Activated CD4-positive, alpha-beta T cell treated with anti-CD3 and anti-CD28 coated beads for 36 hours (primary cell): ENCODE measurements at regions of chr15 and their contacts with region 1.

Region 1: GRCh38 chr15:94670438-94671034 is 439.2 kb downstream of the MCTP2 start:
- DNase-seq: no peak
- ATAC-seq: no peak
- H3K4me3 Mint-ChIP-seq: no peak overlapping the region
- H3K27ac Mint-ChIP-seq: no peak overlapping the region
- H3K4me1 Mint-ChIP-seq: no peaks in the 10 kb centered on the region
- H3K27me3 Mint-ChIP-seq: peaks cover 5% of the 10 kb centered on the region

Region 2: GRCh38 chr15:94877833-94878232 is 207.3 kb after region 1 on chr15:
- CTCF ChIA-PET with region 1: no interaction called
- POLR2A ChIA-PET with region 1: no interaction called
- intact Hi-C with region 1: no loop called
- DNase-seq: no peak
- ATAC-seq: no peak
- H3K4me3 Mint-ChIP-seq: no peak overlapping the region
- H3K27ac Mint-ChIP-seq: no peak overlapping the region
- H3K4me1 Mint-ChIP-seq: no peaks in the 10 kb centered on the region
- H3K27me3 Mint-ChIP-seq: no peaks in the 10 kb centered on the region

Region 3: DNA sequence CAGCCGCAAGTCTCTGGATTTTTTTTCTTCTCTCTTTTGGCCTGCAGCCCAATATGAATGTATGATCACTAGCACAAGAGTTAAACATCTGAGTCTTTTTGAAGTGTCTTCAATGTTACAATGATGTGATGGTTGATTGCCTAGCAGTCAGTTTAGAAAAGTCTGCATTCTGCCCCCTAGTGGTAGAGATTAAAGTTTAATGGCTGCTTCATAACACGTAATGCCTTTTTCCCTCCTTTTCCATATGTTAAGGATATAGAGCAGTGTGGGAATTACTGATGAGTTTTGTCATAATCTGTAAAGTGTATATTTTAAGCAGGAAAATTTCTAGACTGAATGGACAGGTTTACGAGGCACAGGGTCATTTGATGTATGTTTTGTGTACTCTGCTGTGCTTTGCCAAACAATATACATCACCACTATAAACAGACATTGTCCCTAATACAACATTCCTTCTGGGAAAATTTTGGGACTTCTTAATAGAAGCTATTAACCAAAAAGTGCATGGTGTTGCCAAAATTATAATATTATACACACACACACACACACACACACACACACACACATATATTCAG is 621.4 kb after region 1 on chr15:
- CTCF ChIA-PET with region 1: interaction called, 5 read pairs
- POLR2A ChIA-PET with region 1: no interaction called
- intact Hi-C with region 1: loop called (anchors 1 to 2 kb)
- DNase-seq: no peak
- ATAC-seq: no peak
- H3K4me3 Mint-ChIP-seq: no peak overlapping the region
- H3K27ac Mint-ChIP-seq: no peak overlapping the region
- H3K4me1 Mint-ChIP-seq: no peaks in the 10 kb centered on the region
- H3K27me3 Mint-ChIP-seq: peaks cover 29% of the 10 kb centered on the region